H1 (cell line): ENCODE measurements at regions of chr12 and their contacts with region 1.

Region 1: GRCh38 chr12:110224379-110225304 is 56.4 kb upstream of the ATP2A2 start:
- DNase-seq: no peak
- H3K4me3 ChIP-seq: no peak overlapping the region
- H3K27ac ChIP-seq: no peak overlapping the region
- H3K4me1 ChIP-seq: peaks cover 0 to 2% (median 0%) of the 10 kb centered on the region in 4 experiments; a peak in 1 of 7 replicates
- H3K27me3 ChIP-seq: no peaks in the 10 kb centered on the region
- CTCF ChIP-seq: peak in 1 of 3 experiments; percentile 48; a peak in 2 of 4 replicates
- EP300 ChIP-seq: no peak
- POLR2A ChIP-seq: no peak
- RAD21 ChIP-seq: peak; percentile 20 to 29; a peak in 2 of 4 replicates

Region 2: DNA sequence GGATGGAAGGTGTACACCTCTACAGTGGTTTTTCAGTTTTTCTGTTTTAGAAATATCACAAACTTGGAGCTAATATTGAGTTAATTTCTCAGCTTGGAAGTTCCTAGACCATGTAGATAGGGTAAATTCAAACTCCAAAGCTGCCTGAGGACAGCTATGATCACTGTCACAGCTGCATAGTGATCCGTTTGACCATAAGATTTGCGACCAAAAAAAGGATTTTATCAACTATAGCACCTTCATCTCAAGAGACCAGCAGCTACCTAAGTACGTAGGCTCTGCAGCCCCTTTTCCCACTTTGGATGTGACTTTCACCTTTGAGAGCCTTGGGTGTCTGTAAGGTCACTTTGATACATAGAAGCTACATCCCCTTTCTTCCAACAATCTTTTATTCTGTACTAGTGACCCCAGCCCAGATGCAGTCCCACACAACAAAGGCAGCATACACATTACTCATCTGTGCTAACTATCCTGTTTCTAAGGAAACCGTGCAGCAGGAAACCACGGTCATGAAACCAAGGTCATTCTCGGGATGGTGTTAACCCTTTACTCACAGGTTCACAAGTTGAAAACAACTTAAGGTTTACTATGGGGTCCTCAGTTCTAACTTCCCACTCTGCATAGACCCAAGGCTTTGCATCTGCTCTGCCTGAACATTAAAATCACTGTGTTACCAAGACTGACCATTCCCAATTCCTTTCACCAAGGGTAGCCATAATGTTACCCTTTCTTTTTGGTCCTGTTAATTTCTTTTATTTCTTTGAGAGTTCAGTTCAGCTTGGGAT is 25.1 kb before region 1 on chr12:
- CTCF ChIA-PET with region 1: interaction called, 17 read pairs
- POLR2A ChIA-PET with region 1: no interaction called
- DNase-seq: peak in 1 of 2 experiments; percentile 7
- H3K4me3 ChIP-seq: no peak overlapping the region
- H3K27ac ChIP-seq: no peak overlapping the region; the same call in 1 of the 2 replicates
- H3K4me1 ChIP-seq: peaks cover 0 to 7% (median 4%) of the 10 kb centered on the region in 4 experiments; a peak in 4 of 7 replicates
- H3K27me3 ChIP-seq: no peaks in the 10 kb centered on the region
- CTCF ChIP-seq: no peak
- EP300 ChIP-seq: no peak
- POLR2A ChIP-seq: no peak
- RAD21 ChIP-seq: no peak